Right lobe of liver (tissue), 6 donors: ENCODE measurements at regions of chr2 and their contacts with region 1.

Region 1: DNA sequence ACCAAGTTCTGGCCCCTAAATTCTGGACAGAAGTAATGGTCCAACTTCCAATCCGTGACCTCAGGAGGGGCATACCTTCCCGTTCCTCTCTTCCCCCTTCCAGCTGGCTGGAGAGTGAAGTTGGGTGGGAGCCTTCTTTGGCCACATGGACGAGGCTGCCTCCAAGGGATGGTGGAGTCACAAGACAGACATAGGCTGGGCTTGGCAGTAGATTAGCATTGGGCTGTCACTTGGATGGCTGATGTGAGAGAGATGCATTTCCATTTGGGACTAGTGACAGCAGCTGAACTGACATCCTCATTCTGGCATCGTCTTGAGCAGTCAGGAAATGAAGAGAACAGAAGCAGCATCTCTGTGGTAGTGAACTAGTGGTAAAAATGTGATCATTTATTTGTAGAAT is 12.6 kb downstream of the NT5DC4 start:
- DNase-seq: no peak
- ATAC-seq: no peak
- H3K4me3 ChIP-seq: no peak overlapping the region
- H3K27ac ChIP-seq: no peak overlapping the region
- H3K4me1 ChIP-seq: no peaks in the 10 kb centered on the region
- H3K27me3 ChIP-seq: no peaks in the 10 kb centered on the region
- CTCF ChIP-seq: no peak
- POLR2A ChIP-seq: no peak

Region 2: DNA sequence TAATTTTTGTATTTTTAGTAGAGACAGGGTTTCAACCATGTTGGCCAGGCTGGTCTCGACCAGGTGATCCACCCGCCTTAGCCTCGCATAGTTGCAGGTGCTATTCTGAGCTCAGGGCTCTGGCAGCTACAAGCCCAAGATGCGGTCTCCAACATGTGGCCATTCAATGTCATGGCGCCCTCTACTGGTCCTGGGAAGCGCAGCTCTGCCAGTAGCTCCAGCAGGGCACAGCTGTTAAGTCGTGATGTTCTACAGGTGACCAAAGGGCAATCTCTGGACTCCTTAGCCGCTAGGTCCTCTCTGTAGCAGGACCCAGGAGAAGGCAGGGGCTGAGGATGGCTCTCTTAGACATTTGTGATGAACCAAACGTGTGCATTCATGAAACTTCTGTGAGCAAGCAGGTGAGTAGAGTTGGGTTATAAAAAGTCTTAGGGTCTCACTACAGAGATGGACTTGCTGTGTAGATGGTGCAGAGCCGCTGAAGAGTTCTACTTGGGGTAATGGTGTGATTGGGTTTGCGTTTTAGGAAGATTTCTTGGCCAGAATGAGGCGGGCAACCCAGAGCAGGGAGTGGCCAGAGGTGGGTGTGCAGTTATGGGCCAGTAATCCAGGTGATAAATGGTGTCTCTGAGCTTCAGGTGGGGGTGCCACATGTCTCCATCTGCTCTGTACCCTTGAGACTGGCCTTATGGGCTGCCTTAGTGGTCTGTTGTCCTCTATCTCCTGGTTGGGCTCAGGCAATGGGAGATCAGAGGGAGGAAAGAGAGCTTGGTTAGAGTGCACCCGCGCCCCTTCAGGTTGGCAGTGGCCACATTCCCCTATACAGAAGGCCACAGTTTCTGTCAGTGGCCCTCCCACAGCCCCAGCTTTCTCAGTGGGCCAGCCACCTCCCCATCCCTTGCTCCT is 208.6 kb after region 1 on chr2:
- intact Hi-C with region 1: loop called in 1 of 2 experiments (anchors 10 kb)
- DNase-seq: peak; percentile 78 to 83 (median 83)
- ATAC-seq: peak; percentile 63 to 74 (median 68)
- H3K4me3 ChIP-seq: no peak overlapping the region
- H3K27ac ChIP-seq: no peak overlapping the region
- H3K4me1 ChIP-seq: peaks cover 0 to 29% (median 10%) of the 10 kb centered on the region in 4 donors
- H3K27me3 ChIP-seq: no peaks in the 10 kb centered on the region
- CTCF ChIP-seq: peak; percentile 69 to 94 (median 76)
- POLR2A ChIP-seq: no peak